H1 (cell line): ENCODE measurements at regions of chr22 and their contacts with region 1.

Region 1: DNA sequence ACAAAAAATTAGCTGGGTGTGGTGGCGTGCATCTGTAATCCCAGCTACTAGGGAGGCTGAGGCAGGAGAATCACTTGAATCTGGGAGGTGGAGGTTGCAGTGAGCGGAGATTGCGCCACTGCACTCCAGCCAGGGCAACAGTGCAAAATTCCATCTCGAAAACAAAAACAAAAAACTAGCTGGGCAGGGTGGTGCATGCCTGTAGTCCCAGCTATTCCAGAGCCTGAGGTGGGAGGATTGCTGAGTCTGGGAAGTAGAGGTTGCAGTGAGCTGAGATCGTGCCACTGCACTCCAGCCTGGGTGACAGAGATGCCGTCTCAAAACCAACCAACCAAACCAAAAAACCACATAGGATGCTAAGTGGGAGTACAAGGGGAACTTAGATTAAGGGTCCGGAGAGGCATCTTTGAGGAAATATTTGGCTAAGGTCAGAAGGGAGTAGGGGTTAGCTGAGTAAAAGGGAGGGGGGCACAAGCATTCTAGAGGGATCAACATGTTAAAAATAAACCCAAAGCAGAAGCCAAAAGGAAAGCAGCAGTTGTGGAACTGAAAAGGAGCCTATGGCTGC is 10.2 kb downstream of the PHF5A start:
- DNase-seq: no peak
- H3K4me3 ChIP-seq: no peak overlapping the region
- H3K27ac ChIP-seq: no peak overlapping the region
- H3K4me1 ChIP-seq: no peaks in the 10 kb centered on the region
- H3K27me3 ChIP-seq: no peaks in the 10 kb centered on the region
- CTCF ChIP-seq: no peak
- EP300 ChIP-seq: no peak
- POLR2A ChIP-seq: no peak
- RAD21 ChIP-seq: no peak

Region 2: DNA sequence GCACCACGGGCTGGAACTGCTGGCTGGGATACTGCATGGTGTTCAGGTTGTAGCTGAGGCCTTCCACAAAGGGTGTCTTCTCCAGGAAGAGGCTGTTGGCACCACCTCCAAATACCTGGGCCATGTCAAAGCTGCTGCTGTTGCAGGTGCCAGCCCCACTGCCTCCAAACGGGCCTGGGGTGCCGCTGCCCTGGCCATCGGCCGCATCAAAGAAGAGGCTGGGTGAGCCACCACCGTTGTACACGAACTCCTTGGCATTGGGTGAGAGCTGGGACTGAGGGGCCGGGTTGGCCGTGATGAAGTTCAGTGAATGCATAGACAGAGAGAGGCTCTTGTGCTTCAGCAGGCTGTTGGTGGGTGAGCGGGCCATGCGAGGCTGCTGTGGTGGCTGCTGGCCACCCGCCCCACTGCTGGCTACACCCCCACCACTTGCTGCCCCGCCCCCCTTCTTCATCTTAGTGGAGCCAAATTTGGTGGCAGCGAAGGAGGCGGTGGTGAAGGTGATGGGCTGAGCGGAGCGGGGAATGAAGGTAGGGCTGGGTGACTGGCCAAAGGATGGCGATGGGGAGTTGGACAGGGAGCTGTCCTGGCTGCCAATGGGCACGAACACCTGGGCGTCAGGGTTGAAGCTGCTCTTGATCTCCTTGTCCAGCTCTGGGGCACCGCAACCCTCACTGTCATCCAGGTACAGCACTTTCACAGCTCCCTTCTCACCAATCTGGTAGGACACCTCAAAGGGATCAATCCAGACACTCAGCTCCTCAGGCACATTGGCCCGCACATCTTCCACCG is 21.7 kb before region 1 on chr22:
- CTCF ChIA-PET with region 1: no interaction called
- POLR2A ChIA-PET with region 1: interaction called, 12 read pairs
- DNase-seq: no peak
- H3K4me3 ChIP-seq: no peak overlapping the region
- H3K27ac ChIP-seq: no peak overlapping the region
- H3K4me1 ChIP-seq: no peaks in the 10 kb centered on the region
- H3K27me3 ChIP-seq: no peaks in the 10 kb centered on the region
- CTCF ChIP-seq: no peak
- EP300 ChIP-seq: no peak
- POLR2A ChIP-seq: no peak; a peak in 1 of 3 replicates
- RAD21 ChIP-seq: no peak